ENCODE measurements at regions of chr4 and their contacts with region 1.

Region 1: GRCh38 chr4:64158648-64159326 is 250.5 kb downstream of the TECRL start:
- DNase-seq: peak; percentile 74
- ATAC-seq: no peak
- H3K4me3 Mint-ChIP-seq: no peak overlapping the region
- H3K27ac Mint-ChIP-seq: no peak overlapping the region
- H3K4me1 Mint-ChIP-seq: no peaks in the 10 kb centered on the region
- H3K27me3 Mint-ChIP-seq: no peaks in the 10 kb centered on the region

Region 2: GRCh38 chr4:64539234-64539849 is 380.6 kb after region 1 on chr4:
- CTCF ChIA-PET with region 1: interaction called, 11 read pairs
- POLR2A ChIA-PET with region 1: no interaction called
- intact Hi-C with region 1: loop called (anchors 1 kb)
- DNase-seq: peak; percentile 58
- ATAC-seq: peak; percentile 39
- H3K4me3 Mint-ChIP-seq: no peak overlapping the region
- H3K27ac Mint-ChIP-seq: no peak overlapping the region
- H3K4me1 Mint-ChIP-seq: no peaks in the 10 kb centered on the region
- H3K27me3 Mint-ChIP-seq: no peaks in the 10 kb centered on the region

Region 3: DNA sequence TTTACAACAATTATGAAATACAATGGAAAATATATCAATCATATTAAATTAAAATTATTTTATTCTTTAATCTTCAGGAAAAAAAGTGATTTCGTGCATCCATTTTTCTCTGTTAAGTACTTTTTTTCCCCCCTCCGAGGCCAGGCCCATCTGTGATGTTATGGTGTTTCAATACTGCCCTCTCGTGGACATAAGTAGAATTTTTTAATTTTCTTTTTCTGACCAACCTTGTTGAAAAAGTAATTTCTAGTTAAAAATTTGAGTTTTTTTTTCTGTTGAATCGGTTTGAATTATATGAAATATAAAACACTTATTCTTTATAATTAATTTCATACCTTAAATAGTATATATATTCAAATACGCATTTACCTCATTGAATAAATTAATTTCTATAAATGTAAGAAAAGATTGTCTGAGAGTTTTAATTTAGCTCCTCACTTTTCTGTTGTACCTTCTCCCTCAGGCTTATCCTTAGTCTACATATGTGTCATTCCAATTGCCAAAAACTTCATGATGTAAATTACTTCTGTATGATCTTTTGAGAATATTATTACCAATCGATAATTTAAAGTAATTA is 426.3 kb after region 1 on chr4:
- CTCF ChIA-PET with region 1: no interaction called
- POLR2A ChIA-PET with region 1: no interaction called
- intact Hi-C with region 1: loop called in 1 of 2 experiments (anchors 1 kb)
- DNase-seq: peak; percentile 29
- ATAC-seq: no peak
- H3K4me3 Mint-ChIP-seq: no peak overlapping the region
- H3K27ac Mint-ChIP-seq: no peak overlapping the region
- H3K4me1 Mint-ChIP-seq: peaks cover 2% of the 10 kb centered on the region
- H3K27me3 Mint-ChIP-seq: no peaks in the 10 kb centered on the region